Dendritic cell treated with granulocyte-macrophage colony-stimulating factor and Interleukin-4, amounts not matched to agents 40 ng/mL and 50 ng/mL, for 4 days (primary cell): ENCODE measurements at regions of chr6 and their contacts with region 1.

Region 1: DNA sequence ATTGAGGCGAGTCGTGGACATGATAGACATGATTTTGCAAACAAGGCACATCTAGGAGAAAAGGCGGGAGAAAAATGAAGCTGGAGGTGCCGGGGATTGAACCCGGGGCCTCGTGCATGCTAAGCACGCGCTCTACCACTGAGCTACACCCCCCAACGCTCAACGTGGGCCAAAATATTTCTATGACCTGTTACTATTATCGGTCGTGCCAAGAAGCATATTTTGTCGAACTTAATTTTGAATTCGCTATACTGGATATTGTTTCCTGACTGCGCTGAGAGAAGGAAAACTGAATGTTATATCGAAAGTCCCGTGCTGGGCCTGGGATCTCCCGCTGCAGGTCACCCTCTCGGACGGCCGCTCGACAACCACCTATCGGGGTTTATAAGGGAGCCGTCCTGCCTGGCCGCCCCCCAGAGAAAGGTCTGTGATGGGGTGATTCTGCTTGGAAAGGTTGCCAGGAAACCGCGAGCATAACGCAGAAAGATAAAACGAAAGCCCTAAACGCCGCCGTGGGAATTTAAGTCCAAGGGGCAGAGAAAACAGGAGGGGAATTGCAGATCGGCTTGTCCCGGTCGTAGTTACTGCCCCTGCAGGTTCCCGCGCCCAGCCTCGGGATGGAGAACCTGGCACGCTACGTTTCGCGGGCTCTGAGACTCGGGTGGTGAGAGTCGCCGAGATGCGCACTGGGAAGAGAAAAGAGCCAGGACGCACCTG is 60.0 kb downstream of the TRIM27 start:
- H3K4me3 Mint-ChIP-seq: peak overlapping the region; percentile 87
- H3K27ac Mint-ChIP-seq: peak overlapping the region; percentile 60
- H3K4me1 Mint-ChIP-seq: peaks cover 27% of the 10 kb centered on the region
- H3K27me3 Mint-ChIP-seq: peaks cover 41% of the 10 kb centered on the region

Region 2: DNA sequence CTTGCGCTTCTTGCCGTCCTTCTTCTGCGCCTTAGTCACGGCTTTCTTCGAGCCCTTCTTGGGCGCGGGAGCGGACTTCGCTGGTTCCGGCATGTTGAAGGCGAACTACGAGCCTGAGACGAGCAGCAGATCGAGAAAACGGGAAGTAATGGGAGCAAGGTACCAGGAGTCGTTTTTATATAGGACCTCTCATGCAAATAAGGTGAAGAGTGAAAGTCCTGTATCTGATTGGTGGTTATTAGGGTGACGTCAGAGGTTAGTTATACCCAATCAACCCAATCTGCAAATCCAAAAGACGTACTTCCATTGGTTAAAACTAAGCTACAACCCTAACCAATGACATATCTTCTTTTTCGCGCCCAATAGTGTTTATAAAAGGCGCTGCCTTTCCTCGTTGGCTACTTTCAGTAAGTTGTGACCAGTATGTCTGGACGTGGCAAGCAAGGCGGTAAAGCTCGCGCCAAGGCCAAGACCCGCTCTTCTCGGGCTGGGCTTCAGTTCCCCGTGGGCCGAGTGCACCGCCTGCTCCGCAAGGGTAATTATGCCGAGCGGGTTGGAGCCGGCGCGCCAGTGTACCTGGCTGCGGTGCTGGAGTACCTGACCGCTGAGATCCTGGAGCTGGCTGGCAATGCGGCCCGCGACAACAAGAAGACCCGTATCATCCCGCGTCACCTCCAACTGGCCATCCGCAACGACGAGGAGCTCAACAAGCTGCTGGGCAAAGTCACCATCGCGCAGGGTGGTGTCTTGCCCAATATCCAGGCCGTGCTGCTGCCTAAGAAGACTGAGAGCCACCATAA is 1716.9 kb before region 1 on chr6:
- intact Hi-C with region 1: loop called (anchors 5 kb)
- H3K4me3 Mint-ChIP-seq: no peak overlapping the region
- H3K27ac Mint-ChIP-seq: no peak overlapping the region
- H3K4me1 Mint-ChIP-seq: peaks cover 5% of the 10 kb centered on the region
- H3K27me3 Mint-ChIP-seq: no peaks in the 10 kb centered on the region

Region 3: GRCh38 chr6:28838634-28839442 is 24.9 kb before region 1 on chr6:
- intact Hi-C with region 1: loop called (anchors 2 kb)
- H3K4me3 Mint-ChIP-seq: peak overlapping the region; percentile 83
- H3K27ac Mint-ChIP-seq: peak overlapping the region; percentile 70
- H3K4me1 Mint-ChIP-seq: peaks cover 22% of the 10 kb centered on the region
- H3K27me3 Mint-ChIP-seq: peaks cover 79% of the 10 kb centered on the region

Region 4: GRCh38 chr6:28880894-28881780 is 17.4 kb after region 1 on chr6:
- intact Hi-C with region 1: loop called (anchors 2 kb)
- H3K4me3 Mint-ChIP-seq: peak overlapping the region; percentile 79
- H3K27ac Mint-ChIP-seq: no peak overlapping the region
- H3K4me1 Mint-ChIP-seq: peaks cover 24% of the 10 kb centered on the region
- H3K27me3 Mint-ChIP-seq: peaks cover 52% of the 10 kb centered on the region

Region 5: DNA sequence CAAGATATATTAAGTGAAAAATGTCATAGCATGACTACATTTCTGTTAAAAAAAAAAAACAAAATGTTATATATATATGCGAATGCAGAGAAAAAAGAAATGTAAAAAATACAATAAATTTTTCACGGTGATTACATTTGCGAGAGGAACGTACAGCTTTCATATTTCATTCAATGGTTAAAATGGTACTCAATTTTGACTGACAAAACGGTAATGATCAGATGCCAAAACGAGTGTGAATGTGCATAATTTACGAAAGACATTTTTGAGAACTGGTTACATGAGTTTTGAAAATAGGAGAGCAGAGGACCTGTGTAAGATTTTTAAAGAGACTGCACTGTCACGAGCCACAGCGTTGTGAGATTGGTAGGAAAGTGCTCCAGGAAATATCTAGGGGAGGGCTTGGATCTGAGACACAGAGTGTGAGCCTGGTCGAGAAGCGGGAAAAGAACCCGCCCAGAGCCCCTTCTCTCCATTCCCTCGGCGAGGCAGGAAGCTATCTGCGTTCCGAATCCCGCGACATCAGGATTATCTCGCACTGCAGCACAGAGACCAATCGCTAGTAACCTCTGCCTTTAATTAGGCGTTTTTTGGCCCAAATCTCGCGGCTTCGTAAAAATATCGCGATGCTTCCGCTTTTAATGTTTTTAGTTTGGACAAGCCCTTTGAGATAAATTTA is 31.5 kb after region 1 on chr6:
- intact Hi-C with region 1: loop called (anchors 2 kb)
- H3K4me3 Mint-ChIP-seq: peak overlapping the region; percentile 90
- H3K27ac Mint-ChIP-seq: peak overlapping the region; percentile 99
- H3K4me1 Mint-ChIP-seq: peaks cover 27% of the 10 kb centered on the region
- H3K27me3 Mint-ChIP-seq: peaks cover 8% of the 10 kb centered on the region